Psoas muscle (tissue), 8 donors: ENCODE measurements at regions of chr9 and their contacts with region 1.

Region 1: GRCh38 chr9:113401027-113401792 is at the start of gene ALAD:
- DNase-seq: peak; percentile 100
- ATAC-seq: peak; percentile 100
- H3K4me3 ChIP-seq: peak within 1 kb of the TSS; percentile 77
- H3K27ac ChIP-seq: peak within 1 kb of the TSS; percentile 69
- H3K4me1 ChIP-seq: peaks cover 14% of the 10 kb centered on the region
- H3K27me3 ChIP-seq: no peaks in the 10 kb centered on the region
- CTCF ChIP-seq: peak; percentile 93
- total RNA-seq, gene ALAD: 13.1 to 29.0 (median 19.8) TPM

Region 2: GRCh38 chr9:113150670-113151611 is 250.3 kb before region 1 on chr9 and contains the start of gene SLC31A2:
- intact Hi-C with region 1: loop called in 1 of 2 experiments (anchors 10 kb)
- DNase-seq: peak; percentile 92 to 94
- ATAC-seq: peak; percentile 89 to 96 (median 92)
- H3K4me3 ChIP-seq: peak within 1 kb of the TSS; percentile 84
- H3K27ac ChIP-seq: peak within 1 kb of the TSS; percentile 86
- H3K4me1 ChIP-seq: peaks cover 18% of the 10 kb centered on the region
- H3K27me3 ChIP-seq: no peaks in the 10 kb centered on the region
- CTCF ChIP-seq: peak; percentile 23
- total RNA-seq, gene SLC31A2: 10.0 to 21.5 (median 16.2) TPM

Region 3: GRCh38 chr9:113317777-113318176 is 83.4 kb before region 1 on chr9:
- intact Hi-C with region 1: loop called in 1 of 2 experiments (anchors 10 kb)
- DNase-seq: no peak
- ATAC-seq: no peak
- H3K4me3 ChIP-seq: no peak overlapping the region
- H3K27ac ChIP-seq: no peak overlapping the region
- H3K4me1 ChIP-seq: no peaks in the 10 kb centered on the region
- H3K27me3 ChIP-seq: no peaks in the 10 kb centered on the region
- CTCF ChIP-seq: no peak

Region 4: GRCh38 chr9:113340017-113340699 is 61.1 kb before region 1 on chr9 and contains the start of gene WDR31:
- intact Hi-C with region 1: loop called in 1 of 2 experiments (anchors 5 kb)
- DNase-seq: peak; percentile 85 to 91
- ATAC-seq: peak; percentile 97 to 99 (median 98)
- H3K4me3 ChIP-seq: peak within 1 kb of the TSS; percentile 91
- H3K27ac ChIP-seq: peak within 1 kb of the TSS; percentile 61
- H3K4me1 ChIP-seq: peaks cover 3% of the 10 kb centered on the region
- H3K27me3 ChIP-seq: no peaks in the 10 kb centered on the region
- CTCF ChIP-seq: no peak
- total RNA-seq, gene WDR31: 1.7 to 6.9 (median 2.4) TPM

Region 5: DNA sequence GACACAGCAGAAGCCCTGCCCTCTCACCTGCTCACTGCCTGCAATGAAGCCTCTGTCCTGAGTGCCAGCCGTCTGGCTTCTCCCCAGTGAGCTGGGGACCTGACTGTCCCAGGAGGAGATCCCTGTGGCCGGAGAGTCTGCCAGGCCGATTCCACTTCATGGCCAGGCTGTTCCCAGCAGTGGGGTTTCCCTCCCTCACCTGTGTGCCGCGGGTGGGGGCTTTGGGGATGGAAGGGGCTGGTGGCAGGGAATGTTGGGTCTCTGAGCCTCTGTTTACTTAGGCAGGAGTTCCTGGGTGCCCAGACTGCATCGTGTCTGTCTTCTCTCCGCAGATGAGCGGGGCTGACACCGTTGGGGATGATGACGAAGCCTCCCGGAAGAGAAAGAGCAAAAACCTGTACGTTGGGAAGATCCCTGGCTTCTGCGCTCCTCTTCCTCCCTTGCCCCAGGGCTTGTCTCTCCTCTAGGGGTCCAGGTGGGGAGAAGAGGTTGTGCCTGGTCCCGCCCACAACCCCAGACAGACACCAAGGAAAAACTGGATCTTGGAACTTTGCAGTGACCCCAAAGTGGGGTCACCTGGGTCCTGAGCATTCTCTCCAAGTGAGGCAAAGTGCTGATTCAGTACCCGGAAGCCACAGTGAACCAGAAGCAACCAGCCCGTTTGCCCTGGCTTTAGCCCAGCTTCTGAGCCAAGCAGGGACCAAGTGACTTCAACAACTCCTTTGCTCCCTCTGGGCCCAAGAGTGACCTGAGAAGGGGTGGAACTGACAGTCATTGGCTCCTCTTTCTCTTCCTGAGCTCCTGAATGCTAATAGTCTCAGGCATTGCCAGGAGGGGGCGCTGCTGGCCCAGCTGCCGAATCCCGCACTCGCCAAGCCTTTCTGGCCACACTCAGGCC is 190.0 kb after region 1 on chr9:
- intact Hi-C with region 1: loop called in 1 of 2 experiments (anchors 5 kb)
- DNase-seq: peak; percentile 81 to 91
- ATAC-seq: peak; percentile 63 to 75 (median 72)
- H3K4me3 ChIP-seq: no peak overlapping the region
- H3K27ac ChIP-seq: peak overlapping the region; percentile 60
- H3K4me1 ChIP-seq: peaks cover 29% of the 10 kb centered on the region
- H3K27me3 ChIP-seq: no peaks in the 10 kb centered on the region
- CTCF ChIP-seq: peak; percentile 97

Region 6: DNA sequence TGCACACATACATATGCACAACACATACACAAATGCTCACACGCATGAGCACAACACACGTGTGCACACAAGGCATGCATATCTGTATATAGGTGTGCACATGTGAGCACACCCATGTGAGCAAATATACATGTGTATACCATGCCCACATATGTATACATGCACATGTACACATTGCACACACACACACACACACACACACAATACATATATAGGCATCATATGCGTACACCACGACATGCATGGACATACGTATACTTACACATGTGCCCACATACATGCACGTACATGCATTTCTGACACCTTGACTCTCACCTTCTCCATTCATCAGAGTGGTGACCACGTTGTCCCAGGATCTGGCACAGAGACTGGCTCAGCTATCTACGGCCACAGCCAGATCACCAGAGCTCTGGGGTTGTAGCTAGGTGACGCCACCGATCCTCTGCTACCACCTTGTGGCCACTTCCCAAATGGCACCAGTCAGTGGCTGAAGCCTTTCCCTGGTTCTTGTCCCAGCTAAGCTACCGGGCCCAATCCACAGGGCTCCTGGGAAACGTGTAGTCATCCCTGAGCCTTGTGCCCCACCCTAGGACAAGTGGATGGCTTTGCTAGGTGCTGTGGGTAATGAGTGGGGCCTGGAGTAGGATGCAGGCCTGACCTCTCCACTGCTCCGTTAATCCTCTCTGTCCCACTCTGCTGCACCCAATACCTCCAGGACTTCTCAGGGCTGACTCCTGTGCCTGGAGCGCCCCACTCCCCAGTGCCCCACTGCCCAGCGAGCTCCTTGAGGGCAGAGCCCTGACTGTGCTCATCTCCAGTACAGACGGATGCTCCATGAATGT is 256.7 kb after region 1 on chr9:
- intact Hi-C with region 1: loop called in 1 of 2 experiments (anchors 5 kb)
- DNase-seq: peak; percentile 82 to 91
- ATAC-seq: peak; percentile 85 to 93 (median 90)
- H3K4me3 ChIP-seq: no peak overlapping the region
- H3K27ac ChIP-seq: no peak overlapping the region
- H3K4me1 ChIP-seq: peaks cover 22% of the 10 kb centered on the region
- H3K27me3 ChIP-seq: no peaks in the 10 kb centered on the region
- CTCF ChIP-seq: peak; percentile 97